Transverse colon (tissue), 4 donors: ENCODE measurements at regions of chr16 and their contacts with region 1.

Region 1: DNA sequence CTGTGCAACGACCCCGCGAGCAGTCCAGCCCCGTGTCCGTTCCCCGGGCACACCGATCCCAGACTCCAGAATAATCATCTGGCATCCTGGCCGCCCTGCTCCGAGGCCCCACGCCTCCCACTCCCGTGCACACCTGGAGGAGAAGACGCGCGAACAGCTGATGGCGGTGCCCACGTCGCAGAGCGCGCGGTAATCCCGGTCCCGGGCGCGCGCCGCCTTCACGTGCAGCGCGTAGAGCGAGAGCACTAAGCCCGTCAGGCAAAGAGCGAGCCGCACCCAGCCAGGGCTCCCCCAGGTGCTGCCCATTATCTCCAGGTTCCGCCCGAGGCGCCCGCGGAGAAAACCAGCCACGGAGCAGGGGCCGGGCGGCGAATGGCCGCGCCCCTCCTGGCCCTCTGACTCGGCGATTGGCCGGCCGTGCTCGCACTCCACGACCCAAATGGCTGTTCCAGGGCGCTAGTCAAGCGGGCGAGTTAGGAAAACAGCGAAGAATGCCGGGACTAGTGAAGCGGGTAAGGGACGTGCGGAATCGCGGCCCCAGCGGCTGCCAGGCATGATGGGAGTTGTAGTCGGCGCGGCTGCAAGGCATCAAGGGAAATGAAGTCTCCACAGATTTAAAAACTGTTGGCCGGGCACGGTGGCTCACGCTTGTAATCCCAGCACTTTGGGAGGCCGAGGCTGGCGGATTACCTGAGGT is at the start of gene VKORC1:
- DNase-seq: peak; percentile 96
- H3K4me3 ChIP-seq: peak within 1 kb of the TSS; percentile 60 to 77 (median 67)
- H3K27ac ChIP-seq: peak within 1 kb of the TSS; percentile 85 to 98 (median 94)
- H3K4me1 ChIP-seq: peaks cover 6 to 24% (median 18%) of the 10 kb centered on the region in 4 donors
- H3K27me3 ChIP-seq: no peaks in the 10 kb centered on the region
- CTCF ChIP-seq: peak in 1 of 5 experiments; percentile 14
- EP300 ChIP-seq: no peak
- POLR2A ChIP-seq: peak; percentile 61
- total RNA-seq, gene VKORC1: 29.5 to 89.0 (median 72.0) TPM

Region 2: DNA sequence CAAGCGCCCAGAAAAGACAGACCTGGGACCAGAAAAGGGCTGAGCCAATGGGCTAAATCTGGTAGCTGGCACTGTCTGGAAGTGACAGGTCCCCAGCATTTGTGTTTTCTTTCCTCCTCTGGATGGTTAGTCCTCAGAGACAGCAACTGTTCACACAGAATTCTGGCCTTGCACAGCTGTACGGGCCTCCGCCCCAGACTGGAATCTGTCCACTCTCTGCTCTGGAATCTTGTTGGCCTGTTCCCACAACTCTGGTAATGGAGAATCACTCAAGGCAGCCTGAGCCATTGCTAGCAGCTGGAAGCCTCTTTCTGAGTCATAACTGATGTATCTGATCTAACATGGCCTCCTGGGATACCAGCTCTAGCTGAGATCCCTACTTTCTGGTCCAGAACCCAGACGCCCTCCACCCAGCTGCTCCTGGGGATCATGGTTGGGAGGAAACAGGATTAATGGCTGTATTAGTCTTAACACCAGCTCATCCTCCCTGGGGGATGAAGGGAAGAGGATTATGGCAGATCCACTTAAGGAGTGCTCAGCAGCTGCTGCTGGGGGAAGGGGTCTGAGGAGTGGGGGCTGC is 29.6 kb before region 1 on chr16:
- in situ Hi-C with region 1: no loop called
- intact Hi-C with region 1: loop called (anchors 1 kb)
- DNase-seq: no peak
- H3K4me3 ChIP-seq: no peak overlapping the region
- H3K27ac ChIP-seq: peak overlapping the region; percentile 54 to 71 (median 61)
- H3K4me1 ChIP-seq: peaks cover 0 to 11% (median 4%) of the 10 kb centered on the region in 4 donors
- H3K27me3 ChIP-seq: no peaks in the 10 kb centered on the region
- CTCF ChIP-seq: no peak
- EP300 ChIP-seq: no peak
- POLR2A ChIP-seq: no peak